K562 (cell line): ENCODE measurements at regions of chr11 and their contacts with region 1.

Region 1: DNA sequence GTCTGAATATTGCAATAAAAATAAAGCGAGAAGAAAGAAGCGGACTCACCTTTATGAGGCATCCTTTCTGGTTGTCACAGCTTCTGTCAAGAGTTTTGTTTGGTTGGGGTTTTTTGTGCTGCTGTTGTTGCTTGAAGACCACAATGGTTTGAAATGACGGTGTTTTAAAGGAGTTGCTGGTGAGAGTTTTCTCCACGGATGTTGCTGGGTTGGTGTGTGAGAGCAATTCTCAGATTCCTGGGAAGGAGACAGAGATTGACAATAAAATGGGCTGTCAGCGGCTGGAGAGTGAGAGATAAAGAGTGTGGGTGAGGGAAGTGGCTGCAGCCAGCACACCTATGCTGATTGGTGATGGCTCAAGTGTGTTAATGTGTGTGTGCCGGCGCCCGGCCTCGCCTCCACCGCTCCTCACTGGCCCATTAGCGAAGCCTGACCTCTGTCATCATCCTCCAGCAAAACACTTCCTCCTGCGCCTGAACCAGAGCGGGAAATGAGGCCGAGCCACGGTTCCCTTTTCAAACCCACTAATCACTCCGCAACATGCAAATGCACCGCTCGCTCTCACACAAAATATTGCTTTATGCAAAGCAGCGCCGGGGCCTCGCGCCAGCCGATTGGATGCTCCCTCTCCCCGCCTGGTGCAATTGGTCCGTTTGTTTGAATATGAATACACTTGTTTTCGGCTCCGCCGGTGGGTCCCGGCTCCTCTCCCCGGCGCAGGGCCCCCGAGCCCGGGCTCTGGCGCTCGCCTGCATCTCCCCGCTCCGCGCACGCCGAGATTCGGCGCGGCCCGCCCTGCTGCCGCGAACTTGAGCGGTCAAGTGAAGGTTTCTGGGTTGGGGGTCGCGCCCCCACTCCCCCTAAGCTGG is at the start of gene PAX6:
- DNase-seq: peak; percentile 57 to 87 (median 74)
- ATAC-seq: peak; percentile 85
- H3K4me3 ChIP-seq: peak within 1 kb of the TSS; percentile 43
- H3K27ac ChIP-seq: peak within 1 kb of the TSS; percentile 57; the same call in 2 of the 3 replicates
- H3K4me1 ChIP-seq: peaks cover 4 to 46% of the 10 kb centered on the region in 2 experiments; a peak in 4 of 5 replicates
- H3K27me3 ChIP-seq: peaks cover 13 to 56% of the 10 kb centered on the region in 2 experiments; a peak in 4 of 5 replicates
- CTCF ChIP-seq: no peak; a peak in 1 of 6 replicates
- EP300 ChIP-seq: no peak
- POLR2A ChIP-seq: no peak
- RAD21 ChIP-seq: peak in 1 of 2 experiments; percentile 8; a peak in 2 of 4 replicates
- polyA plus RNA-seq, gene PAX6: 1.5 to 2.6 TPM

Region 2: DNA sequence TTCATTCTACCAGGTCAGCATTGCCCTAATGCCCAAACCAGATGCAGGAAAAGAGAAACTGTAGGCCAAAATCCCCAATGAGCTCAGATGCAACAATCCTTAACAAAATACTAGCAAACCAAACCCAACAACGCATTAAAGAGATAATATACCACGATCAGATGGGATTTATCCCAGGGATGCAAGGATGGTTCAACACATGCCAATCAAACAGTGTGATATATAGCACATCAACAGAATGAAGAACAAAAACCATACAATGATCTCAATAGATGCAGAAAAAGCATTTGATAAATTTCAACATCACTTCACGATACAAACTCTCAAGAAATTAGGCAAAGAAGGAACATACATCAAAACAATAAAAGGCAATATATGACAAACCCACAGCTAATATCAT is 346.6 kb before region 1 on chr11:
- CTCF ChIA-PET with region 1: no interaction called
- POLR2A ChIA-PET with region 1: no interaction called
- in situ Hi-C with region 1: no loop called
- intact Hi-C with region 1: no loop called
- DNase-seq: no peak
- ATAC-seq: no peak
- H3K4me3 ChIP-seq: no peak overlapping the region
- H3K27ac ChIP-seq: no peak overlapping the region
- H3K4me1 ChIP-seq: no peaks in the 10 kb centered on the region
- H3K27me3 ChIP-seq: no peaks in the 10 kb centered on the region
- CTCF ChIP-seq: no peak
- EP300 ChIP-seq: no peak
- POLR2A ChIP-seq: no peak
- RAD21 ChIP-seq: no peak

Region 3: GRCh38 chr11:31509429-31510345 is 301.3 kb before region 1 on chr11 and contains the starts of genes ELP4 and IMMP1L:
- CTCF ChIA-PET with region 1: no interaction called
- POLR2A ChIA-PET with region 1: no interaction called
- in situ Hi-C with region 1: no loop called
- intact Hi-C with region 1: loop called (anchors 10 kb)
- DNase-seq: peak; percentile 96 to 99 (median 97)
- ATAC-seq: peak; percentile 95
- H3K4me3 ChIP-seq: peak within 1 kb of the TSS; percentile 94
- H3K27ac ChIP-seq: peak within 1 kb of the TSS; percentile 93
- H3K4me1 ChIP-seq: peaks cover 0 to 6% of the 10 kb centered on the region in 2 experiments; a peak in 1 of 5 replicates
- H3K27me3 ChIP-seq: no peaks in the 10 kb centered on the region
- CTCF ChIP-seq: no peak
- EP300 ChIP-seq: 0 out of 2 replicates have a peak, but pooled peaks have one; percentile 8
- POLR2A ChIP-seq: peak; percentile 92
- RAD21 ChIP-seq: no peak
- polyA plus RNA-seq, gene ELP4: 47.3 to 59.5 TPM
- polyA plus RNA-seq, gene IMMP1L: 179 to 214 TPM

Region 4: DNA sequence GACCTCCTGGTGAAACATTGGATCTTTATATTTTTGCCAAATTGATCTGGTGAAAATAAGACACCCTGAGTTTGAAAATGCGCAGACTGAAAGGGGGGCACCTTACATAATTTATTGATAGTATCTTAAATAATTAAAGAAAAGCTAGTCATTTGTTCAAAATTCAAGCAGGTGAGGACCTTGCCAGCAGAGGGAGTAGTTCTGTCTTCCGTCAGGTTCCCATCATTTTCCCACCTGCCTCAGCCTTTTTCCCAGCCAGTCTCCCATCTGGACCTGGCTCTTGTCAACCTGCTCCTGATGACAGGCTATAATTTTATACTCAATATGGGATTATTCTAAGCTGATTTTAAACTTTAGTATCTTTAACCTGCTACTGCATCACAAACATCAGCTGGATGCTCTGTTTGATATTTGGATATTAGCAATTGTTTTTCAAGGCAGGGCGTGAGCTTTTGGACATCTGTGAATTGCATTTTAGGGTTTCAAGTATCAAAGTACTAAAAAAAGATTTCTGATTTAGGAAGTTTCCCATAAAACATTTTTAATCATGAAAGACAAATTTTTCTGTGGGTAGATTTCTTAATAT is 169.4 kb before region 1 on chr11:
- CTCF ChIA-PET with region 1: no interaction called
- POLR2A ChIA-PET with region 1: no interaction called
- in situ Hi-C with region 1: no loop called
- intact Hi-C with region 1: loop called (anchors 5 kb)
- DNase-seq: peak; percentile 12 to 40 (median 18)
- ATAC-seq: no peak
- H3K4me3 ChIP-seq: no peak overlapping the region
- H3K27ac ChIP-seq: no peak overlapping the region
- H3K4me1 ChIP-seq: no peaks in the 10 kb centered on the region
- H3K27me3 ChIP-seq: no peaks in the 10 kb centered on the region
- CTCF ChIP-seq: peak; percentile 35 to 64 (median 58)
- EP300 ChIP-seq: no peak
- POLR2A ChIP-seq: no peak
- RAD21 ChIP-seq: peak; percentile 15 to 45; a peak in 2 of 4 replicates